ENCODE measurements at regions of chr13 and their contacts with region 1.

Region 1: GRCh38 chr13:106536244-106537034 is 977 bp upstream of the EFNB2 start:
- DNase-seq: peak; percentile 84 to 95 (median 93)
- H3K4me3 ChIP-seq: peak overlapping the region; percentile 63 to 94 (median 83)
- H3K27ac ChIP-seq: peak overlapping the region; percentile 37 to 95 (median 85)
- H3K27me3 ChIP-seq: no peaks in the 10 kb centered on the region
- CTCF ChIP-seq: peak; percentile 81 to 99 (median 96)

Region 2: GRCh38 chr13:104773775-104774174 is 1762.7 kb before region 1 on chr13:
- intact Hi-C with region 1: loop called in 1 of 2 experiments (anchors 10 kb)
- DNase-seq: no peak
- H3K4me3 ChIP-seq: no peak overlapping the region
- H3K27ac ChIP-seq: no peak overlapping the region
- H3K27me3 ChIP-seq: no peaks in the 10 kb centered on the region
- CTCF ChIP-seq: peak in 55 of 56 donors; percentile 22 to 64 (median 52)

Region 3: DNA sequence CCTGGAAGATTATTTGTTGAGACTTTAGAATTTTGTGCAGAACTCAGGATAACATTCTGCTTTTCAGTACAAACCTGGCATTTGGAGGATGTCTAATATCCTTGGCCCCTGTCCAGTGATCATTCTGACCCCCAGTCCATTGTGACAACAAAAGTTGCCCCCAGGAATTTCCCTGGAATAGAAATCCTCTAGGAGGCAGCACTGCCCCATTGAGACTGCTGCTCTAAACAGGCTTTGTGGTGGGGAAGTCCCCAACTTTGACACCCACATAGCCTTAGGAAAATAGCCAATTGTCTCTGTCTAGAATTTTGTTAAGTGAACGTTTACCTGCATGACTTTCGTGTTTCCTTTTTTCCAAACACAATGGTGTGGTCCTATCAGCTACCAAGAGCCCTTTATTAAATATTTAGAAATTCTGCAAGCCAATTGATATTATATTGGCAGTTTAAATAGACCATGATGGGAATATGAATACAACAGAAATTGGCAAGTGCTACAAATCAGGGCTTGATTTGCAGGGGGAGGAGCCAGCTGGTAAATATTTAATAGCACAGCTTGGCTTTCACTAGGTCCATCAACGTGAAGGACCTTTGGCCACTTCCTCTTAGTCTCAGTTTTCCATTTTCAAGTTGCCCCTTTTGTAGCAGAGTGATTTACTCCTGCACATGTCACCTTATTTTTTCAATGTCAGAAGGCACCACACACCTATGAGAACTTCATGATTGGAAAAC is 452.7 kb before region 1 on chr13:
- intact Hi-C with region 1: loop called (anchors 2 to 5 kb)
- DNase-seq: peak in 2 of 10 donors; percentile 32 to 47
- H3K4me3 ChIP-seq: no peak overlapping the region
- H3K27ac ChIP-seq: no peak overlapping the region
- H3K27me3 ChIP-seq: no peaks in the 10 kb centered on the region
- CTCF ChIP-seq: peak in 55 of 56 donors; percentile 36 to 84 (median 67)

Region 4: DNA sequence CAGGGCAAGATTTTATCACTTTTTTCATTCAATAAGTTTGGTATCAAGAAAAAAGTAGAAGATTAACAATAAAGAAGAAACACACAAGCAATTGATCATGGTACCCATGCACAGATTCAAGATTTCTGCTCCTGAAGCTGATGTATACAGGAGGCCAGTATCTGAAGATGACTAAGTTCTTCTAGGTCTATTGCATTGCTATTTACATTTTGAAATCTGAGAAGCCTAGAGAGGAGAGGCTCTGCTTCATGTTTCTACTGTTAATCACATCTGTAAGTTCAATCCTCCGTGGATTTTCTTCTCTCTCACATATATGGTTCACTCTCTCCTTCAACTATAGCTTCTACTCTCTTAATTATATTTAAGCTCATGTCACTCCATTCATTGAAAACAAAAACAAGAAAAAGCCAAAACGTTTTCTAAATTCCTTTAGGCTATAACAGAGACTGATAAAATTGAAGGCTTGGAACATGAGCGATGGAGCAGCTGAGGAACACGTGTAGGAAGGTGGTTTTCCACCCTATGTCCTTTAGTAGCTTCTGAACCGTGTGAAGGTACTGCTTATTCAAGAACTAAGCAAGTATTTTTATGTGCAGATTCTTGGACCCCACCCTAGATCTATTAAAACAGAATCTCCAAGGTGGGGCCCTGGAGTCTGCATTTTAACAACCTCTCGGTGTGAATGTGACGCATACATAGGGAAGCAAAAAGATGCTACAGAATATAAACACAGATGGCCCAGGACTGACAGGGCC is 199.2 kb before region 1 on chr13:
- intact Hi-C with region 1: no loop called
- DNase-seq: no peak
- H3K4me3 ChIP-seq: no peak overlapping the region
- H3K27ac ChIP-seq: no peak overlapping the region
- H3K27me3 ChIP-seq: no peaks in the 10 kb centered on the region
- CTCF ChIP-seq: no peak

Region 5: GRCh38 chr13:106619688-106620555 is 83.5 kb after region 1 on chr13:
- intact Hi-C with region 1: loop called in 1 of 2 experiments (anchors 2 kb)
- DNase-seq: peak in 2 of 10 donors; percentile 20 to 42
- H3K4me3 ChIP-seq: peak overlapping the region in 33 of 59 donors; percentile 3 to 53 (median 31)
- H3K27ac ChIP-seq: no peak overlapping the region
- H3K27me3 ChIP-seq: no peaks in the 10 kb centered on the region
- CTCF ChIP-seq: peak; percentile 27 to 84 (median 77)

Measured in dorsolateral prefrontal cortex (tissue), 120 donors.